ENCODE measurements at regions of chr16 and their contacts with region 1.

Region 1: DNA sequence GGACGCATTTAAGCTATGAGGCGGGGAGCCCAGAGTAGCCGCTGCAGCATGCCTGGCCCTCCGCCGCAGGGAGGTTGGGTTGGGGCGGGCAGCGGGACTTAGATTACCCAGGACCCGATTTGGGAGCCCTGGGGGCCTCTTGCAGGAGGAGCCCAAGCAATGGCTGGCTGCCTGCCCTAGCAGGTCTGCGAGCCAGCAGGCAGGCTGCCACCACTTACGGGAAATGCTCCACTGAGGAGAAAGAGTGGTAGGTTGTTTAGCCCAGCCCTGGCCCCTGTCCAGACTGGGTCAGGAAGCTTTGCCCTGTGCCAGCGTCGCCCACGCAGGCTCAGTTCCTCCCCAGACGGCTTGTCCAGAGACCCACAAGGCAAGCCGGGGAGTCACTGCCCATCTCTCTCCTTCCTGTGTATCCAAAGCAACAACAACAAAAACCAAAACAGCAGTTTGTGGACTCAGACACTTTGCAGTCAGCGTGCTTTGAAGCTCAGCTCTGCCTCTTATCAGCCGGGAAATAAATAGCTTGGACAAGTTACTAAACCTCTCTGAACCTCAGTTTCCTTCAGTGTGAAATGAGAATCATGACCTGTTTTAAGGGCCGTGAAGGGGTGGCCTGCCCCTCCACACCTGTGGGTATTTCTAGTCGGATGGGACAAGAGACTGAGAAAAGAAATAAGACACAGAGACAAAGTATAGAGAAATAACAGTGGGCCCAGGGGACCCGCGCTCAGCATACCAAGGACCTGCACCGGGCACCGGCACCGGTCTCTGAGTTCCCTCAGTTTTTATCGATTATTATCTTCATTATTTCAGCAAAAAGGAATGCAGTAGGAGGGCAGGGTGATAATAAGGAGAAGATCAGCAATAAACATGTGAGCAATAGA is 10.5 kb upstream of the TVP23A start:
- DNase-seq: peak; percentile 97
- ATAC-seq: peak; percentile 87 to 89

Region 2: GRCh38 chr16:10752843-10753523 is 76.1 kb before region 1 on chr16:
- intact Hi-C with region 1: loop called in 1 of 2 experiments (anchors 5 kb)
- DNase-seq: peak; percentile 70
- ATAC-seq: peak; percentile 33 to 38

Region 3: GRCh38 chr16:10776280-10776679 is 52.8 kb before region 1 on chr16:
- intact Hi-C with region 1: loop called in 1 of 2 experiments (anchors 10 kb)
- DNase-seq: no peak
- ATAC-seq: no peak

Measured in left cardiac atrium (tissue), 4 donors.